Activated CD4-positive, alpha-beta memory T cell treated with anti-CD3 and anti-CD28 coated beads for 36 hours (primary cell): ENCODE measurements at regions of chr15 and their contacts with region 1.

Region 1: DNA sequence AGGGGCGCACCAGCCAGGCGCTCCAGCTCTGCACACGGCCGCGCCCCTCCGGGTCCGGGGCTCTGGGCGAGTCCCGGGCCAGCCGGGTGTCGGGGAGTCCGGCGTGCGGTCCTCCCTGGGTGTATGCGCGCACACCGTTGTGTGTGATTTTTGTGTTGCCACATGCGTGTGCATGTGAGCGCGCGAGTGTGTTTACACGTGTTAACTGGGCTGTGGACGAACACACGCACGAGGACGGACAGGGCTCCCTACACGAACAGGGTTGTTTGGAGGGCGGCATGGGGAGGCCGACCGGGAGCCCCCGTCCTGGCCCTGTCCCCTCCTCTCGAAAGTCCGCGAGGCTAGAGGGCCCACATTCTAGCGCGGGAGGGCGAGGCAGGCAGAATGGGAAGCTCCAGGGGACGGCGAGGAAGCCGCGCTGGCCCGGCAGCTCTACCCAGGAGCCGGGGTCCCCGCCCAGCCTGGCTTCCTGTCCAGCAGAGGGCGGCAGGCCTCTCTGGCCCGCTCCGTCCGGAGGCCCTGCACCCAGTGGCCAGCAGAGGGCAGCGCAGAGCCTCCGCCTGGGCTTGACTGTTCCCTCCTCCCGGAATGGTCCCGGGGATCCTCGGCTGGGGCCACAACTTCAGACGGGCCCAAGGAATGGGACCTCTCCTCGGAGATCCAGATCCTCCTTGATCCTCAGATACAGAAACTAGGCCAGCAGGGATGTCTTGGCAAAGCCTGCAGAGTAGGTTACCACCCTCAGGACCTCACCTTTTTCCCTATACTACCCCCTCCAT is 611 bp upstream of the LINGO1 start:
- DNase-seq: peak; percentile 78
- H3K4me3 Mint-ChIP-seq: peak overlapping the region; percentile 29
- H3K27ac Mint-ChIP-seq: no peak overlapping the region
- H3K4me1 Mint-ChIP-seq: peaks cover 8% of the 10 kb centered on the region
- H3K27me3 Mint-ChIP-seq: peaks cover 35% of the 10 kb centered on the region

Region 2: DNA sequence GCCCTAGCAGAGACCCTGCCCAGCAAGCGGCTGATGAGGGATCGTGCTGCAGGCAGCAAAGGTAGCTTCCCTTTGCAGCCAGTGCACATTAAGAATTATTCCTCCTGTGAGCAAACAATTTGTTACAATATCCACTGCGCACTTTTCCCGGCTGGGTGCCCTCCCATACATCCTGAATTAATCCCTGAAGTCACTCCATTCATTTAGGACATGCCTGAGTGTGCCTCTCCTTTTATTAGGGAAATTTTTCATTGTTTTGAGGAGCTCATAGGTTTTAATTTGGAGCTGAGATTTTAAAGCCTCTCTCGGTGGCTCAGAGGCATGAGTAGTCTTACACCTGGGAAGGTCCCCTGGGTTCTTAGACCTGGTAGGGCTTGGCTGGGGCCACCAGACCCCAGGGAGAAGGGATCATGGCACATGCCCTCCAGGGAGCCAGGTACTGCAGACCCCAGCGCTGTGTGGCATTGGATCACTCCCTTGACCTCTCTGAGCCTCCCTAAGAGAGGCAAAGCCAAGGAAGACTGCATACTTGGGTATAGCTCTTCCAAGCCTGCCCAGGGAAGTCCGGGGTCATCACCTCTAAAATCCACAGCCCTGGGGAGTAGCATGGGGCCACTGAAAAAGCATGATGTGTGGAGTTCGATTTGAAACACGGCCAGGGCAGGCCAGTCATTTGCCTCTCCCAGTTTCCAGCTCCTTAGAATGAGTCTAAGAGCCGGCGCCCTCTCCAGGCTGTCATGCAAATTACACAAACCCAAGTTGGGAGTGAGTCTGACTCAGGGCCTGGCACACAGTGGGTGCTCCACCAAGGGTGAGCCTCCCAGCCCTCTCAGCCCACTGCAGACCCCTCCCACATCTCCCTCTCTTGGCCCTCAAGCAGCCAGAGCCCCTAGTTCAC is 151.3 kb after region 1 on chr15:
- CTCF ChIA-PET with region 1: interaction called, 10 read pairs
- POLR2A ChIA-PET with region 1: no interaction called
- intact Hi-C with region 1: no loop called
- DNase-seq: peak; percentile 49
- H3K4me3 Mint-ChIP-seq: no peak overlapping the region
- H3K27ac Mint-ChIP-seq: no peak overlapping the region
- H3K4me1 Mint-ChIP-seq: no peaks in the 10 kb centered on the region
- H3K27me3 Mint-ChIP-seq: peaks cover 3% of the 10 kb centered on the region

Region 3: DNA sequence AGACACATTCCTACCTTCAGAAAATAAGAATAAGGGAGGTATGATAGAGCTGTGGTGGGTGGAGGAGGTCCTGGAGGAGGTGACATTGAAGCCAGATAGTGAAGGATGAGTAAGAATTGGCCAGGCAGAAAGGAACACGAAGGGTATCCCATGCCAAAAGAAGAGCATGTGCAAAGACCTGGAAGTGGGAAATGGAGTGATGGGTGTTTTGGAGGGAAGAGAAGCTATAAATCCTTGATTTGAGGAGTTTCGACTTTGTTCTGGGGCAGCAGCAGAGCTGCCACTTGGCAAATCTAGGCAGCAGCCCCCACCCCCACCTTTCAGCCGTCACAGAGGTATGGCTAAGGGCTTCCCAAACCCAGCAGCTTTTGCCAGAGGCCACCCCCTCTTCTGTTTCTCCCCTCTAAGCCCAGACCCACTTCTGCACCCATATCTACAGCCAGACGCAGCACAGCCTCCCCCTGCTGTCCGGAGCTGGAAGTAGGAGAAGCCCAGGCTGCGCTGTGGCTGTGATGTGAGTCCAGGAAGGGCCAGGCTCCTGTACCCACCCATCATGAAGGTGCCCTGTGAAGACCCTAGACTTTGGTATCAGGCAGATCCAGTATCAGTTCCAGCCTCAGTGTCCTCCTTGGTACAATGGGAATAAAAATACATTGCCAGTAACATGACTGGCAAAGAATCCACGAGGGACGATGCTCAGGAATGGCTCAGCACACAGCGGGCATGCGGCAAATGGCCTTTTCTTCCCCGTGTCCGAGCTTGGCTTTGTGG is 188.1 kb after region 1 on chr15:
- CTCF ChIA-PET with region 1: interaction called, 34 read pairs
- POLR2A ChIA-PET with region 1: no interaction called
- intact Hi-C with region 1: loop called (anchors 1 kb)
- DNase-seq: peak; percentile 52
- H3K4me3 Mint-ChIP-seq: no peak overlapping the region
- H3K27ac Mint-ChIP-seq: no peak overlapping the region
- H3K4me1 Mint-ChIP-seq: peaks cover 2% of the 10 kb centered on the region
- H3K27me3 Mint-ChIP-seq: peaks cover 39% of the 10 kb centered on the region

Region 4: DNA sequence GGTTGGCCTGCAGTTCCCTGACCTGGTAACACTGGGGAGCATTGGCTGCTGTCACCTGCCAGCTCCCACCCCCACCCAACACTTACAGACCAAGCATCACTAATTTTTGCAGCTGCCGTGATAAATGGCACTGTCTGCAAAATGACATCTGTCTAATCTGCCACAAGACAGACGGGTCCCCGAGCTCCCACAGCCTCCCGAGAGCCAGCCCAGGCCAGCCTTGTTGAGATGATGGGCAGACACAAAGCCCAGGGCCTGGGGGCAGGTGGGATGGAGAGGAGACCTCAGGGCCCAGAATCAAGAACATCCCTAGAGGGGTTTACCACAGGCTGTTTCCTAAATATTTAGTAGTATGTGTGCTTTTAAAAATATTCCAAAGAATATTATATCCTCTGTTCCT is 240.7 kb after region 1 on chr15:
- CTCF ChIA-PET with region 1: interaction called, 4 read pairs
- POLR2A ChIA-PET with region 1: no interaction called
- intact Hi-C with region 1: loop called (anchors 2 kb)
- DNase-seq: no peak
- H3K4me3 Mint-ChIP-seq: no peak overlapping the region
- H3K27ac Mint-ChIP-seq: no peak overlapping the region
- H3K4me1 Mint-ChIP-seq: no peaks in the 10 kb centered on the region
- H3K27me3 Mint-ChIP-seq: no peaks in the 10 kb centered on the region